ENCODE measurements at regions of chr22 and their contacts with region 1.

Region 1: GRCh38 chr22:49960159-49961004 is at the start of gene PIM3:
- DNase-seq: peak; percentile 97
- H3K4me3 ChIP-seq: peak within 1 kb of the TSS; percentile 86 to 99 (median 94)
- H3K27ac ChIP-seq: peak within 1 kb of the TSS; percentile 93 to 95 (median 94)
- H3K4me1 ChIP-seq: peaks cover 17 to 43% (median 40%) of the 10 kb centered on the region in 4 donors
- H3K27me3 ChIP-seq: no peaks in the 10 kb centered on the region
- CTCF ChIP-seq: peak in 2 of 5 experiments; percentile 7 to 16
- EP300 ChIP-seq: no peak
- POLR2A ChIP-seq: peak; percentile 97
- total RNA-seq, gene PIM3: 115 to 290 (median 147) TPM

Region 2: DNA sequence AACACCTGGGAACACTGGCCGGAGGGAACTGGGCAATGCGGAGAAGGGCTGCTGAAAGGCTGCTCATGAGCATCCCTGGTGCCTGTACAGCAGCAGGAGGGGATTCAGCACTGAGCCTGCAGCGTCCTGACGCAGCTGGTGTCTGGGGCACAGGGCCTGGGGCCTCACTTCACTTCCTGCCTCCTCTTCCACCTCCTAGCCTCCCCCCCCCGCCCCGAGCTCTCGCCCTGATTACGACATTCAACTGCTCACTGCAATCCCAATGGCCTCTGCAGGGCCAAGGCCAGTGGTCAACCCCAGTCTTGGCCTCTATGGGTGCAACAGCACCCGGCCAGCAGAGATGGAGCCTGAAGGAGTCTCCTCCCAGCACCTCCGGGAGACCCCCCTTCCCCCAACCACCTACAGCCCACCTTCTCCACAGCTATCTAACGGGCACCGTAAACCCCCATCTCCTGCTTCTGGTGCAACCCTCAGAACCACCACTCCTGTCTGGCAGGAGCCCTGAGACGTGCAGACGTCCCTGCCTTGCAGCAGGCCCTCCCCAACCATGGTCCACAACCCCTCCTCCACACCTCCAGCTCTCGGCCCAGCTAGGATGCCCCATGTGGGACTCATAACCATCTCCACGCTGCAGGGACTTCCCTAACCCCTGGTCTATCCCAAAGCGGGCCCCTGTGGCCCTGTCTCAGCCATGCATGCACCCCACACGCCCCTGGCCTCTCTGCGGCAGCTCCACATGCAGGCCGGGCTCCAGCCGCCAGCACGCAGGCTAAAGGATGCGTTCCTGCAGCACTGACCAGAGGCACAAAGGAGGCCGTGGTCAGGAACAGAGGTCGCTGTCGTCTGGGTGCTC is 170.9 kb before region 1 on chr22:
- in situ Hi-C with region 1: no loop called
- intact Hi-C with region 1: no loop called
- DNase-seq: peak; percentile 31
- H3K4me3 ChIP-seq: no peak overlapping the region
- H3K27ac ChIP-seq: peak overlapping the region; percentile 37 to 55 (median 44)
- H3K4me1 ChIP-seq: peaks cover 39 to 56% (median 48%) of the 10 kb centered on the region in 4 donors
- H3K27me3 ChIP-seq: no peaks in the 10 kb centered on the region
- CTCF ChIP-seq: no peak
- EP300 ChIP-seq: no peak
- POLR2A ChIP-seq: no peak

Region 3: DNA sequence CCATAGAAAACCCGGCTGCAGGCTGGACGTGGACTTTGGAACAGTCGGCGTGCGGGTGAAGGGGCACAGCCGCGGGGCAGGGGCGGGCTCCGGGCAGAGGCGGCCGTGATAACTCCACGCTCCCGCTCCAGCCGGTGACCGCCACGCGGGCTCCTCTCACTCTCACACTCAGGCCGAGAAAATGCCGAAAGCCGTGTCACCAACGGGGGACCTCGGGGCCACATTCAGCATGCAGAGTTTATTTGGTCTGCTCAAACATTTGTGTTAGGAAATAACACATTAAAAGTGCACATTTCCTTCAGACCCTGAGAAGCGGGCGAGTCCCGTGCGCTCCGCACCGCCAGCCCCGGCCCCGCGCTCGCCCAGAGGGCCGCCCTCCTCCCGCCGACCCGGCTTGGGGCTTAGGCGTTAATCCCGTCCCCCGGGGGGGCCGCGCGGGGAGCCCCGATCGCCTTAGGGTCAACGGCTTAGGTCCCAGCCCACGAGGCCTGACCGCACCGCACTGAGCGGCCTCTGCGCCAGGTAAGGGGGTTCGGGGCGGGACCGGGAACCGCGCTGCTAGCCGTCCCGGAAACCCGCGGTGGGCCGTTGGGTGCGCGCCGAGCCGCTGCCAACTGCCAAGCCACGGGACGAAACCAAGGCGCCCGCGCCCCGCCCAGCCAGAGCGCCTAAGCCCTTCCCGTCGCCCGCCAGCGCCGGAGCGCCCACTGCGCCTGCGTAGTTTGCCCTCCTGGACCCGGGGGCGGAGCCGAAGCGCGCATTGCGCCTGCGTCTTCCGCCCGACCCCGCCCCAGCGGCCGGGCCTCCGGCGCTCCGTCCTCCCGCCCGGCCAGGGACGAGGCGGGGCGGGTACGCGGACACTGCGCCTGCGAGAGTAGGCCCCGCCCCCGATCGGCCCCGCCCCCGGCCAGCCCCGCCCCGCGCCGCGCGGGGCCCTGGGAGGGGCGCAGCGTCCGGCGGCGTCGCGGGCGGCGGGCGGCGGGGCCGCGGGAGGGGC is 107.2 kb before region 1 on chr22 and contains the start of gene ZBED4:
- in situ Hi-C with region 1: loop called in 1 of 4 experiments (anchors 25 kb)
- intact Hi-C with region 1: no loop called
- DNase-seq: peak; percentile 99
- H3K4me3 ChIP-seq: peak within 1 kb of the TSS; percentile 61 to 89 (median 79)
- H3K27ac ChIP-seq: peak within 1 kb of the TSS; percentile 97 to 99 (median 99)
- H3K4me1 ChIP-seq: peaks cover 26 to 49% (median 43%) of the 10 kb centered on the region in 4 donors
- H3K27me3 ChIP-seq: peaks cover 25% of the 10 kb centered on the region
- CTCF ChIP-seq: no peak
- EP300 ChIP-seq: no peak
- POLR2A ChIP-seq: peak; percentile 89
- total RNA-seq, gene ZBED4: 19.9 to 30.7 (median 24.9) TPM

Region 4: GRCh38 chr22:49936018-49936952 is 24.1 kb before region 1 on chr22:
- in situ Hi-C with region 1: no loop called
- intact Hi-C with region 1: loop called (anchors 2 kb)
- DNase-seq: peak; percentile 92
- H3K4me3 ChIP-seq: peak overlapping the region; percentile 33 to 44 (median 39)
- H3K27ac ChIP-seq: peak overlapping the region; percentile 86 to 97 (median 92)
- H3K4me1 ChIP-seq: peaks cover 36 to 53% (median 40%) of the 10 kb centered on the region in 4 donors
- H3K27me3 ChIP-seq: no peaks in the 10 kb centered on the region
- CTCF ChIP-seq: no peak
- EP300 ChIP-seq: peak; percentile 77
- POLR2A ChIP-seq: peak; percentile 47